Tibial artery (tissue), 4 donors: ENCODE measurements at regions of chr5 and their contacts with region 1.

Region 1: GRCh38 chr5:172714491-172715421 is 56.2 kb downstream of the DUSP1 start:
- DNase-seq: peak; percentile 89 to 94
- H3K4me3 ChIP-seq: no peak overlapping the region
- H3K27ac ChIP-seq: peak overlapping the region; percentile 60 to 73
- H3K4me1 ChIP-seq: peaks cover 0 to 52% (median 38%) of the 10 kb centered on the region in 4 donors
- H3K27me3 ChIP-seq: peaks cover 0 to 6% of the 10 kb centered on the region in 2 donors
- CTCF ChIP-seq: peak; percentile 81 to 92

Region 2: GRCh38 chr5:172533399-172534228 is 181.1 kb before region 1 on chr5:
- intact Hi-C with region 1: no loop called
- DNase-seq: no peak
- H3K4me3 ChIP-seq: no peak overlapping the region
- H3K27ac ChIP-seq: peak overlapping the region in 1 of 2 donors; percentile 38
- H3K4me1 ChIP-seq: peaks cover 0 to 18% (median 12%) of the 10 kb centered on the region in 4 donors
- H3K27me3 ChIP-seq: no peaks in the 10 kb centered on the region
- CTCF ChIP-seq: no peak

Region 3: GRCh38 chr5:172616730-172617129 is 98.0 kb before region 1 on chr5:
- intact Hi-C with region 1: no loop called
- DNase-seq: peak in 1 of 2 donors; percentile 58
- H3K4me3 ChIP-seq: no peak overlapping the region
- H3K27ac ChIP-seq: no peak overlapping the region
- H3K4me1 ChIP-seq: peaks cover 0 to 3% (median 0%) of the 10 kb centered on the region in 4 donors
- H3K27me3 ChIP-seq: no peaks in the 10 kb centered on the region
- CTCF ChIP-seq: no peak

Region 4: DNA sequence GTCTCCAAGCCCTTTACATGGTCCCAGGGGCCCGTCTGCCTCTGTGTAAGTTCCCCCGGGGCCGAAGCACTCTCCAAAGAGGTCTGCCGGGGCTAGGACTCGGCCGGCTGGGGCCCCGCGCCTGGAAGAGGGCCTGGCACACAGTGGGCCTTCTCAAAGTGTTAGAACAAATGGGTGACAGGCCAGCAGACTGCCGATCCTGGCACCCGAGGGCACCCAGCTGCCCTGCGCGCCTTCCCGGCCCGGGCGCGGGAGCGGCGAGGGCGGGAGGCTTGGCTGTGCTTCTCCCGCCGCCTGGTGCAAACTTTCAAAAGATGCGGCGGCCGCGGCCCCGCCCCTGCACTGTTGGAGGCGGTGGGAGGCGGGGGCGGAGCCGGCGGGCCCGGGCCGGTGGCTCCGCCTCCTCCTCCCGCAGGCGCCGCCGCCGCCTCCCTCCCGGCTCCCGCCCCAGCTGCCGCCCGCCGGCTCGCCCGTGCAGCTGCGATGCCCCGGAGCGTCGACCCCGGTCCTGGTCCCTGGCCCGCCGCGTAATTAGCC is 73.9 kb before region 1 on chr5 and contains the start of gene NEURL1B:
- intact Hi-C with region 1: no loop called
- DNase-seq: peak; percentile 52 to 83
- H3K4me3 ChIP-seq: peak within 1 kb of the TSS; percentile 74 to 92
- H3K27ac ChIP-seq: peak within 1 kb of the TSS; percentile 87 to 88
- H3K4me1 ChIP-seq: peaks cover 0 to 59% (median 47%) of the 10 kb centered on the region in 4 donors
- H3K27me3 ChIP-seq: no peaks in the 10 kb centered on the region
- CTCF ChIP-seq: peak in 1 of 2 experiments; percentile 25

Region 5: GRCh38 chr5:172748341-172748843 is 33.6 kb after region 1 on chr5:
- intact Hi-C with region 1: no loop called
- DNase-seq: peak; percentile 81 to 98
- H3K4me3 ChIP-seq: peak overlapping the region; percentile 5 to 6
- H3K27ac ChIP-seq: peak overlapping the region; percentile 90 to 92
- H3K4me1 ChIP-seq: peaks cover 0 to 80% (median 40%) of the 10 kb centered on the region in 4 donors
- H3K27me3 ChIP-seq: no peaks in the 10 kb centered on the region
- CTCF ChIP-seq: peak in 1 of 2 experiments; percentile 22

Region 6: DNA sequence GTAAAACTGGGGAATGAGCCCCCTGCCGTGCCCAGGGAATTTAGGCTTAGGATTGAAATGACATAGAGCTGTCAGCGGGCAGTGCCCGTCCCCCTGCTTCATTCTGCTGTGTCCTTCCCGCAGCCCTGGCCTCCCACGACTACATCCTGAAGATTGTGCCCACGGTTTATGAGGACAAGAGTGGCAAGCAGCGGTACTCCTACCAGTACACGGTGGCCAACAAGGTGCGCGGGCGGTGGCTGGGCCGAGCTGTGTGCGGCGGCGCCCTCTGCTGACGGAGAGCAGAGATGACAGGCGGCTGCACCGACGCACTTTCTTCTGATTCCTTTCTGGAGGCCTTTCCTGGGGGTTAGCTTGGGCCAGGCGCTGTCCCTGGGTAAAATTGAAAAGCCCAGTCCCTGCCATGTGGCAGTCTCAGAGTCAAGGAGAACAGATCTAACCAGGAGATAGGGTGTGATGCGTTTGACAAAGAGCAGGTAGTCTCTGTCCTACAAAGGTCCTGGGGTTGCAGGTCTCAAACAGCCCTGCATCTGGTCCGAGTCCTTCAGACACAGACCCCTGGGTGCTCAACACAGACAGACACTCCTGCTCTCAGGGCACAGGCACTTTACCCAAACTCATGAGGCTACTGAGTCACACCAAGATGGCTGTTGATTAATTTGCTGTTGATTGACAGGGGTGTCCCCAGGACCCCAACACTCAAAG is 217.7 kb after region 1 on chr5:
- intact Hi-C with region 1: loop called (anchors 2 kb)
- DNase-seq: peak; percentile 69 to 87
- H3K4me3 ChIP-seq: no peak overlapping the region
- H3K27ac ChIP-seq: peak overlapping the region; percentile 65 to 75
- H3K4me1 ChIP-seq: peaks cover 0 to 27% (median 21%) of the 10 kb centered on the region in 4 donors
- H3K27me3 ChIP-seq: no peaks in the 10 kb centered on the region
- CTCF ChIP-seq: peak; percentile 96 to 99